ENCODE measurements at regions of chr19 and their contacts with region 1.

Region 1: GRCh38 chr19:41363753-41364523 is at the start of gene B9D2:
- DNase-seq: peak; percentile 89
- H3K4me3 ChIP-seq: peak within 1 kb of the TSS; percentile 60
- H3K27me3 ChIP-seq: no peaks in the 10 kb centered on the region
- CTCF ChIP-seq: no peak
- polyA plus RNA-seq, gene B9D2: 6.6 and 10.9 TPM in 2 replicates

Region 2: GRCh38 chr19:40702337-40703012 is 661.5 kb before region 1 on chr19:
- CTCF ChIA-PET with region 1: no interaction called
- POLR2A ChIA-PET with region 1: interaction called, 13 read pairs
- DNase-seq: no peak
- H3K4me3 ChIP-seq: no peak overlapping the region
- H3K27me3 ChIP-seq: no peaks in the 10 kb centered on the region
- CTCF ChIP-seq: peak; percentile 55

Region 3: GRCh38 chr19:41376241-41376997 is 12.5 kb after region 1 on chr19 and contains the start of gene TMEM91:
- CTCF ChIA-PET with region 1: interaction called, 3 read pairs
- POLR2A ChIA-PET with region 1: interaction called, 10 read pairs
- DNase-seq: no peak
- H3K4me3 ChIP-seq: peak within 1 kb of the TSS; percentile 50
- H3K27me3 ChIP-seq: no peaks in the 10 kb centered on the region
- CTCF ChIP-seq: no peak
- polyA plus RNA-seq, gene TMEM91: 3.2 and 5.1 TPM in 2 replicates

Region 4: GRCh38 chr19:41439441-41440222 is 75.7 kb after region 1 on chr19 and contains the start of gene DMAC2:
- CTCF ChIA-PET with region 1: no interaction called
- POLR2A ChIA-PET with region 1: no interaction called
- DNase-seq: peak; percentile 90
- H3K4me3 ChIP-seq: peak within 1 kb of the TSS; percentile 80
- H3K27me3 ChIP-seq: no peaks in the 10 kb centered on the region
- CTCF ChIP-seq: peak; percentile 57
- polyA plus RNA-seq, gene DMAC2: 54.0 and 82.4 TPM in 2 replicates

Region 5: GRCh38 chr19:41457241-41457640 is 93.3 kb after region 1 on chr19:
- CTCF ChIA-PET with region 1: no interaction called
- POLR2A ChIA-PET with region 1: no interaction called
- DNase-seq: no peak
- H3K4me3 ChIP-seq: no peak overlapping the region
- H3K27me3 ChIP-seq: peaks cover 3% of the 10 kb centered on the region; the same call in 1 of the 2 replicates
- CTCF ChIP-seq: no peak

Measured in BJ (cell line).